ENCODE measurements at regions of chr9 and their contacts with region 1.

Region 1: DNA sequence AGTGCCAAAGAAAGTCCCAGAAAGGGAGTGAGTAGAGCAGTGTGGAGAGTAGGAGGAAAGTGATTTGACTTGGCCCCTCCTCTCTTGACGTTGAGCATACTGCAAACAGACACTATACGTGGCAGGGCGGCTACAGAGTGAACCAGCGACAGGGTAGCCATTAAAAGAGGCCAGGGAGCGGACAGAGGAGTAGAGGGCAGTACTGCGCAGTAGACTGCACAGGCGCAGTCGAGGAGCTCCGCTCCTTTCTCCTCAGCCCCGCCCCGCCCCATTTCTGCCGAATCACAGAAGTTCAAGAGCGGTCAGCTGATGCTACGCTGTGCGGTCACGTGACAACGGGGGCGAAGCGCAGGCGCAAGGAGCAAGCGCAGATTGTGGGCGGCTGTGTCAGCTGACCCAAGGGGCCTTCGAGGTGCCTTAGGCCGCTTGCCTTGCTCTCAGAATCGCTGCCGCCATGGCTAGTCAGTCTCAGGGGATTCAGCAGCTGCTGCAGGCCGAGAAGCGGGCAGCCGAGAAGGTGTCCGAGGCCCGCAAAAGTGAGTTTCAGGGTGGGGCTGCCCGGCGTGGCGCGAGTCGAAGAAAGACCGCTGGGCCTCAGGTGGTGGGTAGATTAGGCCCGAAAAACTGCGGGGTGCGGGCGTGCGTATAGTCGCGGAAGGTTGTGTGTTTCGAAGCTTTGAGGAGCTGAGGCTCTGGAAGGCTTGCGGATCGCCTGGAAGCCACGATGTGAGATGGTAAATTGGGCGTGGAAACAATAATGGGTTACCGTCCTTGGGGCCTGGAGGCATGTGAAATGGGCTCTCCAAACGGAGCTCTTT is at the start of gene ATP6V1G1:
- DNase-seq: peak; percentile 97
- ATAC-seq: peak; percentile 95
- H3K4me3 Mint-ChIP-seq: peak within 1 kb of the TSS; percentile 98
- H3K27ac Mint-ChIP-seq: peak within 1 kb of the TSS; percentile 96
- H3K4me1 Mint-ChIP-seq: peaks cover 43% of the 10 kb centered on the region
- H3K27me3 Mint-ChIP-seq: peaks cover 2% of the 10 kb centered on the region
- total RNA-seq, gene ATP6V1G1: 95.8 to 96.7 TPM

Region 2: DNA sequence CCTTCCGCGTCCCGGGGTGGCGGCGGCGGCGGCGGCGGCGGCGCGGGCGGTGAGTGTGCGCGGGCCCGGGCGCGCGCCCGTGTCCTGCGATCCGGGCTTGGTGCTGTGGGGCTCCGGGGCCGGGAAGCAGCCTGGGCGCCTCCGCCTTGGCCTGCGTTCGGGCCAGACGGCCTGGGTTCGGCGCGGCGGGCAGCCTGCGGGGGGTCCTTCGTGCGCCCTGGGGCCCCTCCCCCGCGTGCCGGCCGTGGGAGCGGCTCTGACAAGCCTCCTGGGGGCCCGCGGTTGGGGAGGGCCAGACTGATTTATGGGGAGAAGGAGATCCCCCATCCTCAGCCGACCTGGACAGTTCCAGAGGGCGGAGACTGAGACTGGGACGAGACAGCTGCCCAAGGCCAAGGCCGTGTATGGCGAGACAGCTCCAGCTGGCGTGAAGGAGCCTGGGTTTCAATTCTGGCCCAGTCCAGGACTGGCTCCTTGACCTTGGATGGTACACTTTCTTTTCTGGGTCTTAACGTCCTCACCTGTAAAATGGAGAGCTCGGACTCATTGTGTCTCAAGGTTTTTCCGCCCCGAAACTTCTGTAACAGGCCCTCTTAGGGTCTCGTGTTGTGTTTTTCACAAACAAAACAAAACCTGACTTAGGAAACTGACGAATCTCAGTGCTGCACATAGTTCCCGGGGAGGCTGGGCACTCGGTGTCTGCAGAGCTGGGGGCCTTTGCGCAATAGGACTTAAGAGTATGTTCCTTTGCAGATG is 24.1 kb after region 1 on chr9:
- POLR2A ChIA-PET with region 1: interaction called, 50 read pairs
- DNase-seq: no peak
- ATAC-seq: peak; percentile 68
- H3K4me3 Mint-ChIP-seq: peak overlapping the region; percentile 82
- H3K27ac Mint-ChIP-seq: peak overlapping the region; percentile 78
- H3K4me1 Mint-ChIP-seq: peaks cover 44% of the 10 kb centered on the region
- H3K27me3 Mint-ChIP-seq: no peaks in the 10 kb centered on the region

Region 3: DNA sequence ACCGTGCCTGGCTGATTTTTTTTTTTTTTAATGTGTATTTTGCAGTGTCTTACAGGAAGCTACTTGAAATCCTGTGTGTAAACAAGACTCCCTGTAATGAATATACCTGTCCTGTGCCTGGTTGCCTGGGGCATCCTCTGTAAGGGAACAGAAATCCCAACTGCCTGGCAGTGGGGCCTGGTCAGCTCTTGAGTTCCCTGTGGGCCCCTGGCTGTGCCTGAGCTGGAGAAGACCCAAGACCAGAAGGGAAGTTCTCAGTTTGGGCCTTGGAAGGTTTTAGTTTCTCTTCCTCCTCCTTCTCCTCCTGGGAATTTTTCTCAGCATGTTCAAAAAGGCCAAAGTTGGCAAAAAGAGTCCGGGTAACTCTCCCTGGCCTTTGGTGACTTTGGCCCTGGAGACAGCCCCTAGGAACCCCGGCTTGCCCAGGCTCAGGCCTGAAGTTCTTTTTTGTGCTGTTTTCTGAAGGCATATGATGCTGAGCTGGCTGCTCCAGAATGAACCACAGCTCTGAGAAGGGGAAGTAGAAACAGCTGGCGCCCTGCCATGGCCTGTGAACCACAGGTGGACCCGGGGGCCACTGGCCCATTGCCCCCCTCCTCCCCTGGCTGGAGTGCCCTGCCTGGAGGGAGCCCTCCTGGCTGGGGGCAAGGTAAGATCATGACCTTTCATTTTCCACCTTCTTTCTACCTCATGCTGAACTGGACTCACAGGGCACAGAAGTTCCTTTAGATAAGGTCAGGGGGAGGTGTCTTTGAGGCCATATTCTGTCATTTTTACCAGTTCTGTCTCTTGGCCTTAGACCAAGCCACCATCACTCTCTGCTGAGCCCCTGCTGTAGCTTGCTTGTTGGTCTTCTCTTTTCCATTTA is 29.3 kb after region 1 on chr9:
- POLR2A ChIA-PET with region 1: interaction called, 50 read pairs
- DNase-seq: peak; percentile 32
- ATAC-seq: no peak
- H3K4me3 Mint-ChIP-seq: peak overlapping the region; percentile 71
- H3K27ac Mint-ChIP-seq: peak overlapping the region; percentile 93
- H3K4me1 Mint-ChIP-seq: peaks cover 46% of the 10 kb centered on the region
- H3K27me3 Mint-ChIP-seq: no peaks in the 10 kb centered on the region

Region 4: GRCh38 chr9:114653556-114654159 is 66.1 kb after region 1 on chr9:
- POLR2A ChIA-PET with region 1: interaction called, 22 read pairs
- DNase-seq: peak; percentile 68
- ATAC-seq: peak; percentile 70
- H3K4me3 Mint-ChIP-seq: no peak overlapping the region
- H3K27ac Mint-ChIP-seq: no peak overlapping the region
- H3K4me1 Mint-ChIP-seq: peaks cover 16% of the 10 kb centered on the region
- H3K27me3 Mint-ChIP-seq: no peaks in the 10 kb centered on the region